GM12878 (cell line): ENCODE measurements at regions of chr6 and their contacts with region 1.

Region 1: GRCh38 chr6:27177485-27178406 is 69.8 kb upstream of the PRSS16 start:
- DNase-seq: peak; percentile 61
- ATAC-seq: peak; percentile 89
- H3K4me3 ChIP-seq: peak overlapping the region; percentile 89
- H3K27ac ChIP-seq: peak overlapping the region; percentile 93
- H3K4me1 ChIP-seq: no peaks in the 10 kb centered on the region
- H3K27me3 ChIP-seq: no peaks in the 10 kb centered on the region
- CTCF ChIP-seq: peak; percentile 65 to 72 (median 70)
- EP300 ChIP-seq: no peak
- POLR2A ChIP-seq: peak; percentile 56; the same call in 1 of the 2 replicates
- RAD21 ChIP-seq: peak; percentile 54

Region 2: DNA sequence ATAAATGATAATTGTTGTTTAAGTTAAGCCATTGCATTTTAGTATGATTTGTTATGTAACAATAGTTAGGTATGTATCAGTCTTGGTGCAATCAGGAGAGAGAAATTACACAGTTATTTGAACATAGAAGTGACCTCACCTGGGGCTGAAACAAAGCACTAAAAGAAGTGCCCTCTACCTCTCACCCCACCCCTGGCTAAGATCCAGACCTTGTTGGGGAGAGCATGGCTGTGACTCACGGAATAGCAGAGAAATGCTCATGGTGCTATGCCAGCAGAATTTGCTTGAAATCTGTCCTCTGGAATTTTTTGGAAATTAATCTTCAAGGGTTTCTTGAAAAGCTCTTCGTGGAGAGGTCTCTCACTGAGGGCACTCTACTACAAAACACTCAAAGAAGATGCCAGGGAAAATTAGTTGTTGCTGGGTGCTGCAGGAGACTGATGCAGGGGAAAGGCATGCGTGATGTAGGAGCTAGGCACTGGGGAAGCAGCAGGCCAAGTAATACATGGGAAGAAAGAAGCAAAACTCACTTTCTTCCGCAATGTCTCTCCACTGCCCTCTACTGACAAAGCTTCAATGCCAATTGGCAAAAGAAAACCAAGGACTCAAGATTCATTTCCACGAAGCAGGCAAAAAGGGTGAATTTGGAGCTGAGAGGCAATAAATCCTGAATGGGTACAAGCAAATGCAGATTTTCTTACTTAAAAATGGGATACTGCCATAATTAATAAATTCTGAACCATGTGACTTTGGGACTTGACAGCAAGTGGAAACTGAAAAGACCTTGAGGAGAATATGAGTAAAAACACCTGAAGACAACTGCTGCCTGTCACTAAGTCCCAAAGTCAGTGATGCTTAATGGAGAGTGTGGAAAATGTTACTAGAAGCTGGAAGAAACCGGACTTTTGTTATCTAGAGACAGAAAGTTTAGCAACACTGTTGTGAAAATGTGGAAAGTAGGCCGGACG is 431.5 kb after region 1 on chr6:
- CTCF ChIA-PET with region 1: interaction called, 10 read pairs
- POLR2A ChIA-PET with region 1: interaction called, 3 read pairs
- RAD21 ChIA-PET with region 1: interaction called, 5 read pairs
- SMC1A ChIA-PET with region 1: no interaction called
- in situ Hi-C with region 1: no loop called
- intact Hi-C with region 1: no loop called
- DNase-seq: peak; percentile 56
- ATAC-seq: peak; percentile 65
- H3K4me3 ChIP-seq: no peak overlapping the region
- H3K27ac ChIP-seq: no peak overlapping the region
- H3K4me1 ChIP-seq: no peaks in the 10 kb centered on the region
- H3K27me3 ChIP-seq: no peaks in the 10 kb centered on the region
- CTCF ChIP-seq: peak; percentile 82 to 90 (median 90)
- EP300 ChIP-seq: no peak
- POLR2A ChIP-seq: no peak
- RAD21 ChIP-seq: peak; percentile 82